MCF 10A (cell line): ENCODE measurements at regions of chr17 and their contacts with region 1.

Region 1: DNA sequence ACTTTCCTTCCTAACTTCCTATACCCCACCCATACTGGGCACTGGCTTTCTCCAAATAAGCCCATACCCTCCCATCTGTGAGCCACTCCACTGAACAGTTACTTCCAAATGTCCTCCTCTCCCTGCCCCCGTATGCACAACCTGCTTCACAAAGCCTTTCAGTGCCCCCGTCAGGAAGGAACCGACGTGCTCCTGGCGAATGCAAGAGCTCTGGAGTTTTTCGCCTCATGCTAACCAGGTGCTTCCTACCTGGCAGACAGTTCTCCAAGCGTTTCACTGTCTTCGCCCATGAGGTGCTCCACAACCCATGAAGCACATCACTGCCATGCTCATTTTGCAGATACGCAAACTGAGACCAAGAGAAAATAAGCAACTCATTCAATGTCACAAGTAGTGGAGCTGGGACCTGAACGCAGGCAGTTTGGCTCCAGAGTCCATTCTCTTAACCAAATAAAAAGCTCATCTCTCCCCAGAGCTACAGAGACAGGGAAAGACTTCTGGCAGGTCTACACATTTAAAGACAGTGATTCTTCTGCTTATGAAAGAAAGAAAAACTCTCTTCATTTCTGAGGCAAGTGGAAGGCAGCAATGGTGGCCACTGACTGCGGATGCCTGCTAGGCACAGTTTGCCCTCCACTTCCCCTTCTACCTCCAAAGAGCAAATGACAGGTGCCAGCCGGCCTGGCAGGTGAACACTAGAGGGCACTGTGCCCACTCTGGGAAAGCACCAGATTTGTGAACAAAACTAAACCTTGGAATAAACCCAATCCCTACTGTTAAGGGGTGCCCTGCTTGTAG is 23.8 kb downstream of the SPHK1 start:
- DNase-seq: peak; percentile 75
- H3K4me3 Mint-ChIP-seq: no peak overlapping the region
- H3K27ac Mint-ChIP-seq: no peak overlapping the region
- H3K4me1 Mint-ChIP-seq: no peaks in the 10 kb centered on the region
- H3K27me3 Mint-ChIP-seq: no peaks in the 10 kb centered on the region
- CTCF ChIP-seq: peak; percentile 75

Region 2: DNA sequence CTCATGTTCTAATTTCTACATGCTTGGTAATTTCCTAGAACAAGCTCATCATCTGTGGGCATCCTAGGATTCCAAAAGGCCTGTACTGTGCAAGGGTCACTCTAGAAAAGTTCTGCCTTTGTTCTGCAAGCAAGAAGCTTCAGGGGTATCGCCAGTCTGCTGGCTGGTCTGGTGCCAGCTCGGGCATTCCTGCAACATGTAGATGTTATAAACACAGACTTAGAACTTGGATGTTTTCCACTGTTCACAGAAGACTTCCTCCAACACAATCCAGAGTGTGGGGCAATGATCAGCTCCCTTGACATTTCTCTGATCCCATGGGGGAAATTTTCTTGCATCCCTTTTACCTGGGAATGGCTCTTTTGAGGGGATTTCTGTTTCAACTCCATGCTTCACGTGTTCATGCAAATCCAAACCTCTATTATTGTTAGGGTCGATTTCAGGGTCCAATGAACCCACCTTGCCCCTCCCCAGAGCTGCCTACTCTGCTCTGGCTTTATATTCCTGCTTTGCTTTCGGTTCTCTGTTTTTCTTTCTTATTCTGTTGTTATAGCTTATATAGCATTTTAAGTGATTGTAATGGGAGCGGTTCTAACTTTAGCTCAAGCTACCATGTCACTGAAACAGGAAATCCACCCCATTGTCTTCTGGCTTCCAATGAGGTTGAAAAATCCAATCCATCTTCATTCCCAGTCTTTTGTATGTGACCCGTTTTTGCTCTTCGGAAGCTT is 19.4 kb after region 1 on chr17:
- CTCF ChIA-PET with region 1: interaction called, 13 read pairs
- POLR2A ChIA-PET with region 1: no interaction called
- intact Hi-C with region 1: no loop called
- DNase-seq: peak; percentile 30
- H3K4me3 Mint-ChIP-seq: no peak overlapping the region
- H3K27ac Mint-ChIP-seq: no peak overlapping the region
- H3K4me1 Mint-ChIP-seq: no peaks in the 10 kb centered on the region
- H3K27me3 Mint-ChIP-seq: no peaks in the 10 kb centered on the region
- CTCF ChIP-seq: no peak

Region 3: DNA sequence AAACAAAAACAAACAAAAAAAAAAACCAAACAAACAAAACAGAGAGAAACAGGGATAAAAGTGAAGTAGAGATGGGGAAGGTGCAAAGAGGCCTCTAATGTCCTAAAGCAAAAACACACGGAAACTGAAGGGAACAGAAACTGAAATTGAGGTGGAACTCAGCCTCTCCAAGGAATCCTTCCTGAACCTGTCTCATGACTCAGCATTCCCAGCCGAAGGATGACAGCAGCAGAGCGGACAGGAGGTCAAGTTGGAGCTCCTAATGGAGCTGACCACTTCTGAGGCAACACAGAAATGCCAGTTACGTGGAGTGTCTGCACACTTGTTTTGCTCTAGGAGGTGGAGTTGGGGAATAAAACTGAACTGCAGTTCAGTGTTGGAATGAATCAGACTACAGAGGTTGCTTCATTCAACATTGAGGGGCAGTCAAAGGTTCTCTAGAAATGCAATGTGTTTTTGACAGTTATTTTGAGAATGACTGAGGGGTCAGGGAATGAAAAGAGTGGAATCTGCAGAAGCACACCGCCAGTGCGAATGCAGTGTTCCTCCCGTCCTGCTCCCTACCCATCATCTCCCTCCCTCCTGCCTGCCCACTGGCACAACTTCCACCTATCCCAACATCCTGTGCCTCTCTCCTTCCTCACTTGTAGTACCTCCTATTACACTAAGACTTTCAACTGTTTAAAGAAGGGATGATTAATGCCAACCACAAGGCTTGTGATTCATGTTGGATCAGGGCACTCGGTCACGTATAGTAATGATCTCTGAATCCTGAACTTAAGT is 38.4 kb after region 1 on chr17:
- CTCF ChIA-PET with region 1: interaction called, 13 read pairs
- POLR2A ChIA-PET with region 1: interaction called, 4 read pairs
- intact Hi-C with region 1: no loop called
- DNase-seq: peak; percentile 86
- H3K4me3 Mint-ChIP-seq: peak overlapping the region; percentile 57
- H3K27ac Mint-ChIP-seq: peak overlapping the region; percentile 82
- H3K4me1 Mint-ChIP-seq: peaks cover 46% of the 10 kb centered on the region
- H3K27me3 Mint-ChIP-seq: no peaks in the 10 kb centered on the region
- CTCF ChIP-seq: no peak

Region 4: DNA sequence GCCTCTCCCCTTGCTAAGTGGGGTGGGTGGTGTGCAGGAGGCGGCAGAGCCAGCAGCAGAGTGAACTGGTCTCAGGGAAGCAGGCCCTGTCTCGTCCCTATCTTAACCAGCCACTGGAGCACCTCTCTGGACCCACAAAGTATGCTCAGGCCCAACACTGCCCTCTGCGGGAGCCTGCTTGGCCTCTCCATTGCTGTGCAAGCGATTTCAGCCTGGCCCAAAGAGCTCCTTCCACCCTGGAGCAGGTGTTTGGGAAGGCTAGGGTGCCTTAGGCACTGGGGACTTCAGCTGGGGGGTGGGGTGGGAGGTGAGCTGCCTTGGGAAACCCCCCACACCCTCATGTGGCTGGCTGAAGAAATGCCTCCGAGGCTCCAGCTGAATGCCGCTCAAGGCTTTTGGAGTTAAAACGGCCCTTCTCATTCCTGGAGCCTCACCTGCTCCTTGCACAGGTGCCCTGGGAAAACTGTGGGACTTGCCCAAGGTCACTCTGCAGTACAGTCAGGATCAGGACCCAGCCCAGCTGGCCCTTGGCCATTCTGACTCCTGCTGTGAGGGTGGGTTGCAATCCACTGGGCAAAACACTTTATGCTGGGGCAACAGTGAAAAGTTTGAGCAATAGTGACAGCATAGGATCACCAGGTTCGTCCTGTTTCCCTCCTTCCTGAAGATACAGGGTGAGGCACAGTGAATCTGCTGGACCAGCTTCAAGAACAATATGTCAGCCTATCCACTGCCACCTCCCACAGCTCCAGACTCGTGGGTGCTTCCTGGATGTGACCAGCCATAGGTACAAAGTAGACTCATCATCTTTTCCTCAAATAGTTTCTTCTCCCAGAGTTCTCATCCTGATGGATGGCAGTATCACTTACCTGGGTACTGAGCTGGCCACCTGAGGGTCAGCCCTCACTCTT is 50.6 kb after region 1 on chr17:
- CTCF ChIA-PET with region 1: interaction called, 72 read pairs
- POLR2A ChIA-PET with region 1: interaction called, 8 read pairs
- intact Hi-C with region 1: loop called (anchors 1 kb)
- DNase-seq: peak; percentile 72
- H3K4me3 Mint-ChIP-seq: no peak overlapping the region
- H3K27ac Mint-ChIP-seq: no peak overlapping the region
- H3K4me1 Mint-ChIP-seq: no peaks in the 10 kb centered on the region
- H3K27me3 Mint-ChIP-seq: no peaks in the 10 kb centered on the region
- CTCF ChIP-seq: peak; percentile 60

Region 5: DNA sequence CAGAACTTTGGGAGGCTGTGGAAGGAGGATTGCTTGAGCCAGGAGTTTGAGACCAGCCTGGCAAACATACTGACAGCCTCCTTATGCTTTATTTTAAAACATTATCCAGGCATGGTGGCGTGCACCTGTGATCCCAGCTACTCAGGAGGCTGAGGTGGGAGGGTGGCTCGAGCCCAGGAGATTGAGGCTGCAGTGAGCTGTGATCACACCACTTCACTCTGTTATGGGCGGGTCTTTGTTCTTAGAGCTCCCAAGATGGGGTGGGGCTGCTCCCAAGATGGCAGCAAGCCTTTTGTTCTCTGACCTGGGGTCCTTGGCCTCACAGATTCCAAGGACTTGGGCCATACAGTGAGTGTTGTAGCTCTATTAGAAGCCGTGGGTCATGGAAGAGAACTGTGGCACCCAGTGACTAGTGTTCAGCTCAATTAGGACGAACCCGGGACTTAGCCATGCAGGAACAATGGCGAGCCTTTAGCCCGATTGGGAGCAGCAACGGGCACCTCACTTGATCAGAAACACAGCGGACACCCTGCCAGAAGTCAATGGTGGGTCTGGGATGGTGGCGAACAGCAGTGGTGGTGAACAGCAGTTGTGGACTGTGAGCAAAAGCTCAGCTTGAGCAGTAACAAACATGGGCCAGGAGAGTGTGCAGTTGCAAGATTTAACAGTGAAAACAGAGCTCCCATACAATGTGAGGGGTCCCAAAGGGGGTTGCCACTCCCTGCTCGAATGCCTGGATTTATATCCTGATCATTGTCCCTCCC is 203.7 kb after region 1 on chr17:
- CTCF ChIA-PET with region 1: no interaction called
- POLR2A ChIA-PET with region 1: no interaction called
- intact Hi-C with region 1: no loop called
- DNase-seq: no peak
- H3K4me3 Mint-ChIP-seq: no peak overlapping the region
- H3K27ac Mint-ChIP-seq: no peak overlapping the region
- H3K4me1 Mint-ChIP-seq: peaks cover 11% of the 10 kb centered on the region
- H3K27me3 Mint-ChIP-seq: no peaks in the 10 kb centered on the region
- CTCF ChIP-seq: no peak